AG04450 (cell line): ENCODE measurements at regions of chr6 and their contacts with region 1.

Region 1: DNA sequence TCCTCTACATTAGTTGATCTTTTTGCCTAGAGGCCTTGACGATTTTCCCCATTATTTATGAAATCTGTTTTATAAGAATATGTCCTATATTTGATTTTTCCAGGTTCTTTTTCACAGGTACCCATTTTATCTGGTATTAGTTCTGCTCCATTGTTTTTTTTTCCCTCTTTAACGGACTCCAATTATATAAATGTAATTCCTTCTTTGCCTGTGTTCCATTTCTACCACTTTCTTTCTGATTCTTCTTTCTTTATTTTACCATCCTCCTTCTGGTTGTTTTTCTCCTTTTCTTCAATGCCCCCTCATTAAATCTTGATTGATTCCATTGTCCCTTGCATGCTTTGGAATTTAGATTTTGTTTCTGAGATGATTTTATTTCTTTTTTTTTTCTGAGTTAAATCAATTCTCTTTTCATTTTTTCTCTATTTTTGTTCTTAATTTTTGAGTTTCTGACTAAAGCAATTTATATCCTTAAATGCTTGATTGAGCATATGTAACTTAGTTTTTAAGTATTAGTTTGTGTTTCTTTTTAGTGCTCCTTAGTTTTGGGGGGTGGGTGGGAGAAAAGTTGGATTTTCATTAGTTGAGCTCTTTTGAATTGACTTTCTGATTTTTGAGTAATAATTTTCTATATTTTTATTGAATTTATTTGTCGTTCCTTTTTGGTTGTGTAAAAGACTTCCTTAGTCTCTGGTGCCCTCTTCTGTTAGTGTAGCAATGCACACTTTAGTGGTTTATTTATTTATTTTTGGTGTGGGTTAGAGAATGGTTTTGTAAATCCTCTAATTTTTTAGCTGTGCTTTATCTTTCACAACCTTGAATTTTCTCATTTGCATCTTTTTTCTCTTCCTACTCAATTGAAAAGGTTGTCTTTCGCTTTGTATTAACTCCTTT is 140.8 kb downstream of the FARS2 start:
- DNase-seq: no peak
- H3K4me3 ChIP-seq: no peak overlapping the region
- H3K27ac ChIP-seq: no peak overlapping the region
- H3K27me3 ChIP-seq: no peaks in the 10 kb centered on the region
- CTCF ChIP-seq: peak; percentile 63

Region 2: DNA sequence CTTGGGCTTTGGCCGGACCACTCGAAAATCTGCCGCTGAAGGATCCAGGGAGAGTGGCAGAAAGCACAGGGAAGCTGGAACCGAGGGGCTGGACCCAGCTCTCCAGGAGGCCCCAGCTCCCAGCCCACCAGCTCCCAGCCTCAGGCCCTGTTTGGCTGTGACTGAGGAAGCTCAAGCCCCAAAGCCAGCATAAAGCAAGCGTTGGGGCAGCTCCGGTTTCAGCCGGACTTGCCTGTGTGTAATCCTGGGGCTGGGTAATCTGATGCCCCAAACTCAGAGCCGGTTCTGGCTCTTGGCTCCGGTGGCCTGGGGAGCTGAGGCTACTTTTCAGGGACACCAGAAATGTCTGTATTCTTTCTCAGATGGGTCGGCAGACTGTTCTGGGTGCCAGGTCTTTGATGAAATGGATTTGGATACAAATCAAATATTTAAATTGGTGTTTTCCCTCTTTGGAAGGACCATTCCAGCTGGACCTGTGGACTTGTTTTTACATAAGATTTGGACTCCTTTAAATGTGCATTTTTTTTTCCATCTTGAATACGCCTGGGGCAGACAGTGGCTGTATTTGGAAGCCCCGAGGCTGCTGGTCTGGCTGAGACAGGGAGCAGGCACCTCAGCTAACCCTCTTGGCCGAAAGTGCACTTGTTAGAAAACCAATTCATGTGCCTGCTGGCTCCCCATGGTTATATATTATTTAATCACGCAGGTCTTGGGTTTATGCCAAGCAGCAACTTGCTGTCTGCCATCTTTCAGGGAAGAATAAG is 427.9 kb before region 1 on chr6:
- CTCF ChIA-PET with region 1: no interaction called
- POLR2A ChIA-PET with region 1: no interaction called
- DNase-seq: peak; percentile 37
- H3K4me3 ChIP-seq: no peak overlapping the region
- H3K27ac ChIP-seq: peak overlapping the region; percentile 49
- H3K27me3 ChIP-seq: peaks cover 5% of the 10 kb centered on the region
- CTCF ChIP-seq: no peak

Region 3: DNA sequence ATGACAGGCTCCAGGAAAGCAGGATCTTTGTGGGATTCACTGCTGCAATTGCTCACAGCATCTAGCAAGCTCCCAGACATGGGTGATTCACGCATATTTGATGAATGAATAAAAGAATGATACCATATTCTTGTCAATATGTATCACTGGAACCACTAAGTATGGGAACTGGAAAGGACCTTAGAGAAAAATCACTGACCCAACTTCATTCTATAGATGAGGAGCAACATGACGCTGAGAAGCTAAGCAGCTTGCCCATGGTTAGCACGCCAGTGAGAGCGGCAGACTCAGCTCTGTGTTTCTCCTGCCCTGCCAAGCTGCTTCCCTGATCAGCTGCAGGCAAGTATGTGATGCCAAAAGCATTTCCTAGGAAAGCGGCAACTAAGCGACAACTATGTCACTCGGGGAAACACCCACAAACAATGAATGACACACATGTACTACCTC is 250.1 kb before region 1 on chr6:
- CTCF ChIA-PET with region 1: interaction called, 17 read pairs
- POLR2A ChIA-PET with region 1: no interaction called
- DNase-seq: peak; percentile 18
- H3K4me3 ChIP-seq: no peak overlapping the region
- H3K27ac ChIP-seq: no peak overlapping the region
- H3K27me3 ChIP-seq: no peaks in the 10 kb centered on the region
- CTCF ChIP-seq: no peak

Region 4: GRCh38 chr6:5379647-5380242 is 22.3 kb before region 1 on chr6:
- CTCF ChIA-PET with region 1: interaction called, 10 read pairs
- POLR2A ChIA-PET with region 1: no interaction called
- DNase-seq: no peak
- H3K4me3 ChIP-seq: no peak overlapping the region
- H3K27ac ChIP-seq: no peak overlapping the region
- H3K27me3 ChIP-seq: no peaks in the 10 kb centered on the region
- CTCF ChIP-seq: peak; percentile 69

Region 5: GRCh38 chr6:5471044-5471443 is 69.0 kb after region 1 on chr6:
- CTCF ChIA-PET with region 1: no interaction called
- POLR2A ChIA-PET with region 1: no interaction called
- DNase-seq: peak; percentile 29
- H3K4me3 ChIP-seq: no peak overlapping the region
- H3K27ac ChIP-seq: no peak overlapping the region
- H3K27me3 ChIP-seq: no peaks in the 10 kb centered on the region
- CTCF ChIP-seq: peak; percentile 94

Region 6: DNA sequence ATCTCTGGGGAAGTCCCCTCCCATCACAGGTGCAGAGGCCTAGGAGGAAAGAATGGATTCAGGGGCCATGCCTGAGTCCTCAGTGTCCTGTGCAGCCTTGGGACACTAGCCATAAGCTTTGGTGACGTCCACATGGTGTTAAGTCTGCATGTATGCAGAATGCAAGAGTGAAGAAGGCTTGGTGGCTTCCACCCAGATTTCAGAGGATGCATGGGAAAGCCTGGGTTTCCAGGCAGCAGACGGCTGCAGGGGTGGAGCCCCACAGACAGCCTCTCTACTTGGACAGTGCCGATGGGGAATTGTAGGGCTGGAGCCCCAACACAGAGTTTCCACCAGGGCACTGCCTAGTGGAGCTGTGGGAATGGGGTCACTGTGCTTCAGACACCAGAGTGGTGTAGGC is 721.7 kb after region 1 on chr6:
- CTCF ChIA-PET with region 1: no interaction called
- POLR2A ChIA-PET with region 1: interaction called, 14 read pairs
- DNase-seq: no peak
- H3K4me3 ChIP-seq: no peak overlapping the region
- H3K27ac ChIP-seq: no peak overlapping the region
- H3K27me3 ChIP-seq: no peaks in the 10 kb centered on the region
- CTCF ChIP-seq: no peak

Region 7: GRCh38 chr6:6547110-6547879 is 1145.2 kb after region 1 on chr6:
- CTCF ChIA-PET with region 1: interaction called, 12 read pairs
- POLR2A ChIA-PET with region 1: no interaction called
- DNase-seq: peak; percentile 47
- H3K4me3 ChIP-seq: peak overlapping the region; percentile 34
- H3K27ac ChIP-seq: no peak overlapping the region
- H3K27me3 ChIP-seq: peaks cover 6% of the 10 kb centered on the region
- CTCF ChIP-seq: peak; percentile 88